T-cell (primary cell): ENCODE measurements at regions of chr21 and their contacts with region 1.

Region 1: DNA sequence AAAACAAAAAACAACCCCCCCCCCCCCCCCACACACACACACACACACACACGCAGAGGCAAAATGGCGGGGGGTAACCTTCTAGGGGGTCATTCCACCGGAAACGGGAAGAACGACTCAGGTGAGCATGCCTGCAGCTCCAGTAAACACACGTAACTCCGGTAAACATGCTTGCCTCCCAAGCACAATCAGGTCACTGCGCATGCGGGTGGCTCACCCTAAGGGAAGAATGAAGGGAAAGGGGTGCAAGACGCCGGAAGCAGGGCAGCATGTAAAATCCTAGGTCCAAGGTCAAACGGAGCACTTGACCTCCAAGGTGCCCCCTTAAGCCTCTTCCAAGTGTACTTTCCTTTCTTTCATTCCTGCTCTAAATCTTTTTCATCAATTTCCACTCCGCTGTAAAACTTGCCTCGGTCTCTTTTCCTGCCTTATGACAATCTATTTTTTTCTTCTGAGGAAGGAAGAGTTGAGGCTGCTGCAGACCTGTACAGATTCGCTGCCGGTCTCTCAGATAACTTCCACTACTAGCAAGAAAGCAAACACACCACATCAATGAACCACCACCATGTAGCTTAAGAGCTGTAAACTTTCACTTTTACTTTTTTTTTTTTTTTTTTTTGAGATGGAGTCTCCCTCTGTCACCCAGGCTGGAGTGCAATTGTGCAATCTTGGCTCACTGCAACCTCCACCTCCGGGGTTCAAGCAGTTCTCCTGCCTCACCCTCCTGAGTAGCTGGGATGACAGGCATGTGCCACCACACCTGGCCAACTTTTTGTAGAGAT is 21.0 kb upstream of the CBR3 start:
- DNase-seq: peak in 30 of 35 experiments; percentile 11 to 84 (median 42)
- ATAC-seq: peak; percentile 82 to 93 (median 86)
- H3K4me3 ChIP-seq: peak overlapping the region; percentile 68 to 75
- H3K4me3 Mint-ChIP-seq: peak overlapping the region; percentile 68 to 82 (median 72)
- H3K27ac ChIP-seq: peak overlapping the region; percentile 73
- H3K27ac Mint-ChIP-seq: peak overlapping the region; percentile 90 to 95
- H3K4me1 ChIP-seq: peaks cover 28 to 29% of the 10 kb centered on the region in 2 experiments
- H3K4me1 Mint-ChIP-seq: peaks cover 26 to 33% (median 31%) of the 10 kb centered on the region in 3 donors
- H3K27me3 ChIP-seq: no peaks in the 10 kb centered on the region
- H3K27me3 Mint-ChIP-seq: no peaks in the 10 kb centered on the region

Region 2: DNA sequence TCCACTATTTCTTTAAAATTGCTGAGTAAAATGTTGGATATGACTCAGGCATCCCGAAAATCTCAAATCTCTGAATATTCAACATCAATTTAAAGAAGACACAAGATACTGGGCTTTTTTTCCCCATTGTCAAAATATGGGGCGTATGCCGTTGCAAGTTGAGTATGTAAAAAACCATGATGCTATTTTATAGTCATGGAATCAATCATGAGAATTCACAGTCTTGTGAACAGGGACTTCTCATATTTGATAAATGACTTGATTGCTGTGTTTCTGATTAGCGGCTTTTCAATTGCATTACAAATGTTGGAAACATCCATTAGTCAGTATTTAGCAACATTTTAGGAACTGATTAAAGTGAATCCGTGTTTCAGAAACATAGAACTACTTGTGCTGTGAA is 98.8 kb before region 1 on chr21:
- CTCF ChIA-PET with region 1: no interaction called
- POLR2A ChIA-PET with region 1: no interaction called
- DNase-seq: no peak
- ATAC-seq: no peak
- H3K4me3 ChIP-seq: no peak overlapping the region
- H3K4me3 Mint-ChIP-seq: no peak overlapping the region
- H3K27ac ChIP-seq: no peak overlapping the region
- H3K27ac Mint-ChIP-seq: no peak overlapping the region
- H3K4me1 ChIP-seq: no peaks in the 10 kb centered on the region
- H3K4me1 Mint-ChIP-seq: no peaks in the 10 kb centered on the region
- H3K27me3 ChIP-seq: peaks cover 2 to 11% of the 10 kb centered on the region in 2 experiments
- H3K27me3 Mint-ChIP-seq: peaks cover 6 to 23% of the 10 kb centered on the region in 2 donors

Region 3: GRCh38 chr21:36060159-36060921 is 53.5 kb before region 1 on chr21 and contains the start of gene SETD4:
- CTCF ChIA-PET with region 1: interaction called in 1 of 2 experiments, 13 read pairs
- POLR2A ChIA-PET with region 1: interaction called, 6 to 7 read pairs
- DNase-seq: peak; percentile 79 to 94 (median 88)
- ATAC-seq: peak; percentile 91 to 92 (median 92)
- H3K4me3 ChIP-seq: peak within 1 kb of the TSS; percentile 76 to 77
- H3K4me3 Mint-ChIP-seq: peak within 1 kb of the TSS; percentile 79 to 96 (median 93)
- H3K27ac ChIP-seq: peak within 1 kb of the TSS; percentile 85
- H3K27ac Mint-ChIP-seq: peak within 1 kb of the TSS; percentile 98
- H3K4me1 ChIP-seq: peaks cover 3 to 17% of the 10 kb centered on the region in 2 experiments
- H3K4me1 Mint-ChIP-seq: peaks cover 10 to 30% (median 20%) of the 10 kb centered on the region in 3 donors
- H3K27me3 ChIP-seq: no peaks in the 10 kb centered on the region
- H3K27me3 Mint-ChIP-seq: no peaks in the 10 kb centered on the region
- total RNA-seq, gene SETD4: 16.5 to 36.4 (median 30.3) TPM